ENCODE measurements at regions of chr6 and their contacts with region 1.

Region 1: DNA sequence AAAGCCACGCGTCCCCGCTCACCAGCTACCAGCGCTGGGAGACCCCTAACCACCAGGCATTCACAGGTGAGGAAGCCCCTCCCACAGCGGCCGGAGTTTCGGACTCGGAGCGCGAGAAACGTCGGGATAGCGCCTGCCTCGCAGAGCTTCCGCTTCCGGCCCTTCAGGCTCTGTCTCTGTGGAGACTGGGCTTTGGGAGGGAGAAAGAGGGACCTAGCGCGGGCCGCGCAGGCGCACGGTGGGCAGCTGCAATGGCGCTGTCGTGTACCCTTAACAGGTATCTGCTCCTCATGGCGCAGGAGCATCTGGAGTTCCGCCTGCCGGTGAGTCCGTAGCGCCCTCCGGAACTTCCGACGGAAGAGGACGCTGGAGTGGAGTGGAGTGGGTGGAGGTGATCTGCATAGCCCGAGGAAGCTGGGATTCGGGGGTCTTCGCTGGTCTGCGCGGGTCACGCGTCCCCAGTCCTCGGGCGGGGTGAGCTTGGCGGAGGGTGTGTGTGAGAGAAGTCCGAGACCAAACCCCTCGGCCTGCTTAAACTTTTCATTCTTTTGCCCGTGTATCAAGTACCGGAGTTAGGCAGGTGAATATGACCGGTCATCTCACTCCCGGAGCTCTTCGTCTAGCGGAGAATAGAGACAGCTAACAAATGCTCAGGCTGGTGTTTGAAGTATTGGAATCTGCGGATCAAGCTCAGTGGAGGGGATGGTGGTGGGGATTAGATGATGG is at the start of gene TRMT11:
- DNase-seq: peak; percentile 87
- H3K4me3 ChIP-seq: peak within 1 kb of the TSS; percentile 78
- H3K27ac ChIP-seq: peak within 1 kb of the TSS; percentile 44
- H3K4me1 ChIP-seq: peaks cover 32% of the 10 kb centered on the region
- CTCF ChIP-seq: peak; percentile 16; the same call in 1 of the 2 replicates
- total RNA-seq, gene TRMT11: 42.5 and 46.8 TPM in 2 replicates

Region 2: GRCh38 chr6:125658759-125659431 is 327.6 kb before region 1 on chr6:
- CTCF ChIA-PET with region 1: no interaction called
- POLR2A ChIA-PET with region 1: no interaction called
- intact Hi-C with region 1: no loop called
- DNase-seq: no peak
- H3K4me3 ChIP-seq: no peak overlapping the region
- H3K27ac ChIP-seq: no peak overlapping the region
- H3K4me1 ChIP-seq: no peaks in the 10 kb centered on the region
- CTCF ChIP-seq: no peak

Region 3: GRCh38 chr6:125944434-125944816 is 42.0 kb before region 1 on chr6:
- CTCF ChIA-PET with region 1: no interaction called
- POLR2A ChIA-PET with region 1: no interaction called
- intact Hi-C with region 1: no loop called
- DNase-seq: no peak
- H3K4me3 ChIP-seq: no peak overlapping the region
- H3K27ac ChIP-seq: no peak overlapping the region
- H3K4me1 ChIP-seq: peaks cover 5% of the 10 kb centered on the region
- CTCF ChIP-seq: no peak

Region 4: DNA sequence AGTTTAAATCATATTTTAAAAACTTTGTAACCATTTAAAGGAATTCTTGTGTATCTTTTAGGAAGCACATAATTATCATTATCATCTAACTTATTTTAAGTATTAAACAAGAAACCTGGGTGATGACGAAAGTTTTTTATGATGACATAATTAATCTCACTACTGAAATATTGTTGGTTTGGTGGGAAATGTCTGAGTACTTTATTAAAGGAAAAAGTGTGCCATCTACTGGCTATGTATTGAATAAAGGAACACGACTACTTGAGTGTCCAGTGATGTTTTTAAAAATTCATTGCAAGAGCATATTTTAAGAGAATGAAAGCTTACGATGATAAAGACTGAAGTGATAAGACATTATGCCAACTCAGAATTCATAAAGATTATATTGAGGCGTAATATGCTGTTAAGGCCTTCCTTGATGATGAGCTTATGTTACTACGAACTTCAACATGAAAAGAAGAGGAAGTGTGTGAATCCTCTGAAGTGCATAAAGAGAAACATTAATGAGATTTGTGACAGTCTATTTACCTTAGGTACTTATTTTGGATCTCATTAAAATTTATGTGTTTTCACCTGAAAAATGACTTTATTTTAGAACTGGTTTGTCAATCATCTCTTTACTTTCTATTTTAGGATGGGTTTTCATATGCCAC is 12.1 kb before region 1 on chr6:
- CTCF ChIA-PET with region 1: interaction called, 7 read pairs
- POLR2A ChIA-PET with region 1: interaction called, 14 read pairs
- intact Hi-C with region 1: no loop called
- DNase-seq: peak; percentile 76
- H3K4me3 ChIP-seq: no peak overlapping the region
- H3K27ac ChIP-seq: no peak overlapping the region
- H3K4me1 ChIP-seq: peaks cover 5% of the 10 kb centered on the region
- CTCF ChIP-seq: peak; percentile 92

Region 5: GRCh38 chr6:126285871-126286365 is 299.5 kb after region 1 on chr6:
- CTCF ChIA-PET with region 1: no interaction called
- POLR2A ChIA-PET with region 1: no interaction called
- intact Hi-C with region 1: no loop called
- DNase-seq: no peak
- H3K4me3 ChIP-seq: no peak overlapping the region
- H3K27ac ChIP-seq: no peak overlapping the region
- H3K4me1 ChIP-seq: no peaks in the 10 kb centered on the region
- CTCF ChIP-seq: no peak

Measured in OCI-LY7 (cell line).